Dorsolateral prefrontal cortex (tissue), 120 donors: ENCODE measurements at regions of chr20 and their contacts with region 1.

Region 1: DNA sequence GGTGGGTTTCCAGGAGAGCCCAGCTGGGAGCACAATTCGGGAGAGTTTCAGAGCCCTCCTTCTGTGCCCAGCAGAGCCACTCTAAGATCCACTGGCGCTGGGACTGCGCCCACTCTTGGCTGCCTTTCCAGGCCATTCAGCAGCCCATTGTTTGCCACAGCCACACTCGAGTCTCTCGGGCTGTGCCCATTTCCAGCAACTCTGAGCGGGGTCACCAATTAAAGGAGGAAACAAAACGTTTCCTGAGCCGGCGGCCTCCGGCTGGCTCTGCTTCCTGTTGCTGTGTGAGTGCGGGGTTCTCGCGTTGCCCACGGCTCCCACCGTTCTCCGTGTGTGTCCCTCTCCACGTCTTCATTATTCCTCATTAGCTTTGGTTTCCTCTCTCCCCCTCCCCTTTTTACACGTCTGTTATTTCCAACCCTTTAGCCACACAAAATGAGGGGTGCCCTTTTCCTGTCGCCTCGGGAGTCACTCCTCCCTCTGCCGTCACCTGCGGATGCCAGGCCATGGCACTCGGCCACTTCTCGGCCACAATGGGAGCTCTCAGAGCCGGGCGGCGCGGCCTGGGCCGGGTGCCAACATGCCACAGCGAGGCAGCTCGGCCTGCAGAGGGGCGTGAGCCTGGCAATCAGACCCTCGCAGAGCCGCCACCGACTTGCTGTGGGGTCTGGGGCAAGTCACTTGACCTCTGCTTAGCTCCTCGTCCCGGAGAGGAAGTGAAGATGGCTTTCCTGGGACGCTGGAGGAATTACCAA is 94.3 kb upstream of the NKX2-2 start:
- DNase-seq: peak; percentile 33 to 93 (median 90)
- H3K4me3 ChIP-seq: peak overlapping the region in 54 of 59 donors; percentile 11 to 62 (median 38)
- H3K27ac ChIP-seq: peak overlapping the region; percentile 72 to 99 (median 96)
- H3K27me3 ChIP-seq: peaks cover 0 to 34% (median 5%) of the 10 kb centered on the region in 45 donors
- CTCF ChIP-seq: peak in 18 of 56 donors; percentile 4 to 34 (median 16)

Region 2: GRCh38 chr20:21235484-21236445 is 372.4 kb before region 1 on chr20:
- intact Hi-C with region 1: no loop called
- DNase-seq: peak; percentile 43 to 87 (median 82)
- H3K4me3 ChIP-seq: peak overlapping the region in 54 of 59 donors; percentile 1 to 59 (median 32)
- H3K27ac ChIP-seq: peak overlapping the region; percentile 44 to 99 (median 93)
- H3K27me3 ChIP-seq: no peaks in the 10 kb centered on the region
- CTCF ChIP-seq: peak; percentile 60 to 95 (median 82)

Region 3: GRCh38 chr20:21373436-21373835 is 234.7 kb before region 1 on chr20:
- intact Hi-C with region 1: no loop called
- DNase-seq: no peak
- H3K4me3 ChIP-seq: no peak overlapping the region
- H3K27ac ChIP-seq: no peak overlapping the region
- H3K27me3 ChIP-seq: no peaks in the 10 kb centered on the region
- CTCF ChIP-seq: no peak

Region 4: DNA sequence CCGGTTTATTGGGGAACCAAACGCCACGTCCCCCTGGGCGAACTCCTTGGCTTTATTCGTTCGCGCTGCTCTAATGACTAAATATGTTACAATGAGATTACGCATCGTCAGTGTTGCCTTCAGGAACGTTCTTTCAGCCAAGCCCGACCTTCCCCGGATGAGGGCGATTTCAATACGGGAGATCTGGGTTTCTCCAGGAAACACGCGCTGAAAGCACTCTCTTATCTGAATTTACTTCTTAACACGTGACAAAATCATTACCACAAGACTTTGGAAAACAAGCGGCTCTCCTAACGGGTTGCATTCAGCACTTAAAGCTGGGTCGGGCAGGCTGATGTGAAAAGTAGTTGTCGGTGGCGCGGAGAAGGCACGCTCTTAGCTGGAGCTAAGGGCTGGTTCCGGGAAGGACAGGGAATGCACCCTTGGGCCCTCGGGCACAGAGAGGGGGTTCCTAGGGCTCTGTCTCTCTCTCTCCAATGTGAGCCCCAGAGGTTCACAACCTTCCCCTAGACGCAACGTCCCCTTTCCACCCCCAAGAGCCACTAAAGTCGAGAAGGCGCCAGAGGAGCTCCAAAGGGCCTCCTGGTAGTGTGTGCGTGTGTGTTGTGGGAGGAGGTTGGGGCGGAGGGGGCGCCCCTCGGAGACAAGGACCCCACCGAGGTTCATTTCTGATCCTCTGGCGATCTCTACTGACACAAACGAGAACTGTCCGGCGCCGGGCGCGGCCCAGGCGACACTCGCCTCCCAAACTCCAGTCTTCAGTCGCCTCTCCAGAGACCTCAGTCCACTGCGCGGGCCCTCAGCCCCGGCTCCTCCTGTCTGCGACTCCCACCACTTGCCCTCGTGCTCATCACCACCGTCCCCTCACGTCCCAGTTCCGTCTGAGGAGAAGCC is 87.2 kb before region 1 on chr20:
- intact Hi-C with region 1: loop called (anchors 2 to 5 kb)
- DNase-seq: peak in 4 of 10 donors; percentile 62 to 77 (median 70)
- H3K4me3 ChIP-seq: peak overlapping the region; percentile 33 to 83 (median 66)
- H3K27ac ChIP-seq: peak overlapping the region in 58 of 59 donors; percentile 20 to 98 (median 86)
- H3K27me3 ChIP-seq: peaks cover 0 to 98% (median 79%) of the 10 kb centered on the region in 45 donors
- CTCF ChIP-seq: peak in 55 of 56 donors; percentile 18 to 79 (median 64)

Region 5: DNA sequence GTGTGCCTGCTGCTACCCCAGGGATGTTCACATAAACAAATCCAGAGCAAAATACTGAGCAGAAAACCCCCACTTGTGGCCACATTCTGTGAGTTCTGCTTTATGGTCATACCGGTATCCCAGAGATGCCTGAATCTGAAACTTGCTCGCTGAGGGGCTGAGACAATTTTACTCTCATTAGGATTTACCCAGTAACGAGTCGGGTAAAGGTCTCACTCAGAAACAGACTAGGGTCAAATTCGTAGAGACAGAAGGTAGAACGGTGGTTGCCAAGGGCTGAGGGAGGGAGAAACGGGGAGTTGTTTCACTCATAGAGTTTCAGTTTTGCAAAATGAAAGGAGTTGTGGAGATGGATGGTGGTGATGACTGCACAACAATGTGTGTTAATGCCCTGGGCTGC is 48.8 kb before region 1 on chr20:
- intact Hi-C with region 1: loop called in 1 of 2 experiments (anchors 10 kb)
- DNase-seq: no peak
- H3K4me3 ChIP-seq: no peak overlapping the region
- H3K27ac ChIP-seq: no peak overlapping the region
- H3K27me3 ChIP-seq: peaks cover 0 to 34% (median 0%) of the 10 kb centered on the region in 45 donors
- CTCF ChIP-seq: no peak

Region 6: GRCh38 chr20:21571841-21572690 is 36.1 kb before region 1 on chr20:
- intact Hi-C with region 1: loop called in 1 of 2 experiments (anchors 5 kb)
- DNase-seq: peak in 2 of 10 donors; percentile 10 to 35
- H3K4me3 ChIP-seq: peak overlapping the region in 26 of 59 donors; percentile 4 to 45 (median 25)
- H3K27ac ChIP-seq: peak overlapping the region in 7 of 59 donors; percentile 21 to 58 (median 37)
- H3K27me3 ChIP-seq: peaks cover 0 to 4% (median 0%) of the 10 kb centered on the region in 45 donors
- CTCF ChIP-seq: peak; percentile 67 to 96 (median 88)

Region 7: GRCh38 chr20:21583486-21584168 is 24.5 kb before region 1 on chr20:
- intact Hi-C with region 1: no loop called
- DNase-seq: no peak
- H3K4me3 ChIP-seq: no peak overlapping the region
- H3K27ac ChIP-seq: no peak overlapping the region
- H3K27me3 ChIP-seq: peaks cover 0 to 6% (median 0%) of the 10 kb centered on the region in 45 donors
- CTCF ChIP-seq: no peak